Heart left ventricle (tissue), 16 donors: ENCODE measurements at regions of chr1 and their contacts with region 1.

Region 1: GRCh38 chr1:21255278-21255942 is 34.9 kb downstream of the ECE1 start:
- DNase-seq: peak; percentile 87 to 93 (median 90)
- ATAC-seq: peak; percentile 73 to 90 (median 84)
- H3K4me3 ChIP-seq: no peak overlapping the region
- H3K27ac ChIP-seq: peak overlapping the region in 8 of 12 donors; percentile 31 to 59 (median 43)
- H3K4me1 ChIP-seq: peaks cover 0 to 39% (median 21%) of the 10 kb centered on the region in 12 donors
- H3K27me3 ChIP-seq: no peaks in the 10 kb centered on the region
- CTCF ChIP-seq: peak; percentile 79 to 93 (median 88)
- POLR2A ChIP-seq: no peak

Region 2: DNA sequence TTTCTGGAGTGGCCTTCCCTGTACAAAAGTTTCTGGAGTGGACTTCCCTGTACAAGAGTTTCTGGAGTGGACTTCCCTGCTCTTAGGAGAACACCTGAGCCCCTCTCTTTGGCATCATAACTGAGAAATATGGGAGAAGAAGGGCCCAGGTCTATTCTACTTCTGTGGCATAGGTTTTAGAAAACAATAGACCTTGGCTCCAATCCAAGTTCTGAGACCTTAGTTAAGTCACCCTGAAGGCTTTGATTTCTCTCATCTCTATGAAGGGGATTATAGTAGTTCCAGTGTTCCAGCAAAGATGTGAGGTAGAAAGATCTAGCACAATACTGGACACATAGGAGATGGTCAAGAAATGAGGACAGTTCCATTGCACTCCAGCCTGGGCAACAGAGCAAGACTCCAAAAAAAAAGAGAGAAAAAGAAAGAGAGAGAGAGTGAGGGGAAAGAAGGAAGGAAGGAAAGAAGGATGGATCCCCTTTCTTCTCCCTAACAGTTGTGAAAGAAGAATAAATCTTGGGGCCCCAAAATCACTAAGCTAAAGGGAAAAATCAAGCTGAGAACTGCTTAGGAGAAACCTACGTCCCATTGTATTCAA is 65.4 kb before region 1 on chr1:
- intact Hi-C with region 1: no loop called
- DNase-seq: no peak
- ATAC-seq: peak in 1 of 4 donors; percentile 36
- H3K4me3 ChIP-seq: no peak overlapping the region
- H3K27ac ChIP-seq: no peak overlapping the region
- H3K4me1 ChIP-seq: peaks cover 0 to 21% (median 6%) of the 10 kb centered on the region in 12 donors
- H3K27me3 ChIP-seq: no peaks in the 10 kb centered on the region
- CTCF ChIP-seq: no peak
- POLR2A ChIP-seq: no peak

Region 3: GRCh38 chr1:21334214-21335087 is 79.0 kb after region 1 on chr1:
- intact Hi-C with region 1: loop called in 8 of 10 experiments (anchors 1 to 5 kb)
- DNase-seq: peak; percentile 76 to 88 (median 77)
- ATAC-seq: peak; percentile 23 to 59 (median 53)
- H3K4me3 ChIP-seq: peak overlapping the region in 10 of 12 donors; percentile 18 to 50 (median 34)
- H3K27ac ChIP-seq: peak overlapping the region; percentile 15 to 94 (median 82)
- H3K4me1 ChIP-seq: peaks cover 18 to 93% (median 74%) of the 10 kb centered on the region in 12 donors
- H3K27me3 ChIP-seq: no peaks in the 10 kb centered on the region
- CTCF ChIP-seq: peak; percentile 67 to 91 (median 84)
- POLR2A ChIP-seq: peak in 1 of 2 donors; percentile 8

Region 4: DNA sequence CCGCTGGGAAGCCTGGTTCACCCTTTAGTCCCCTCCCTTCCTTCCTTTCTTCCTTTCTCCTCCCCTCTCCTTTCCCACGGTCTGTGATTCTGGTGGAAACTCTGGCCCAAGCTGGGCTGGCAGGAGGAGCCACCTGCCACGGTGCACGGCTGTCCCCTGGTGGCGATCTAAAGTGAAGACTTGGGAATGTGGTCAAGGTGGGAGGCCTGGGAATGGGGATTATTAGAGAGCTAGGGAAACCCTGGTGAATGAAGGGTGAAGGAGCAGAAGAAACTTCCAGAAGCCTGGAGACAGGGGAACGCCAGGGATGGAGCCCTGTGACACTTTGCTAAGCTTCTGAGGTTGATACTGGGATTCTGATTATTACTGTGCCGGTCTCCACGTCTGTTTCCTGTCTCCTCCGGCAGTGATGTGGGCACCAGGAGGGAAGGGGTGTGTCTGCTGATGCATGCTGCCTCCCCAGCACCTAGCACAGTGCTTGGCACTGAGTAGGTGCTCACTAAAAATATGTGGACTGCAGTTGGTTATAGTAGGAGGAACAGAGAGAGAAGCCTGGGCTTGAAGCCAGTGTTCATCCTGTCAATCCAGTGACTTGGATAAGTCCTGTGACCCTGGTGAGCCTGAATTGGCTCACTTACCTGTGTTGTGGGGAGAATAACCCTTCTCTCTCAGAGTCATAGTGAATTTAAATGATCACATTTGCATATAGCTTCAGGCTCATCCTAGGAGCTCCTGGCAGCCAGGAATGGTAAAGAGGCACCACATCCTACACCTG is 113.3 kb after region 1 on chr1:
- intact Hi-C with region 1: loop called (anchors 1 to 2 kb)
- DNase-seq: peak; percentile 80 to 88 (median 83)
- ATAC-seq: peak; percentile 79 to 96 (median 94)
- H3K4me3 ChIP-seq: peak overlapping the region in 1 of 12 donors; percentile 12
- H3K27ac ChIP-seq: peak overlapping the region in 1 of 12 donors; percentile 17
- H3K4me1 ChIP-seq: peaks cover 0 to 12% (median 1%) of the 10 kb centered on the region in 12 donors
- H3K27me3 ChIP-seq: no peaks in the 10 kb centered on the region
- CTCF ChIP-seq: peak; percentile 96 to 100 (median 99)
- POLR2A ChIP-seq: no peak

Region 5: GRCh38 chr1:21594935-21595897 is 339.8 kb after region 1 on chr1:
- intact Hi-C with region 1: loop called in 1 of 10 experiments (anchors 10 kb)
- DNase-seq: peak; percentile 53 to 80 (median 70)
- ATAC-seq: peak in 2 of 4 donors; percentile 48 to 56
- H3K4me3 ChIP-seq: no peak overlapping the region
- H3K27ac ChIP-seq: no peak overlapping the region
- H3K4me1 ChIP-seq: peaks cover 0 to 7% (median 0%) of the 10 kb centered on the region in 12 donors
- H3K27me3 ChIP-seq: no peaks in the 10 kb centered on the region
- CTCF ChIP-seq: peak; percentile 50 to 71 (median 64)
- POLR2A ChIP-seq: no peak

Region 6: GRCh38 chr1:21659099-21659923 is 403.9 kb after region 1 on chr1:
- intact Hi-C with region 1: loop called in 2 of 10 experiments (anchors 5 to 10 kb)
- DNase-seq: peak; percentile 72 to 89 (median 75)
- ATAC-seq: peak; percentile 72 to 78 (median 76)
- H3K4me3 ChIP-seq: peak overlapping the region in 4 of 12 donors; percentile 23 to 33 (median 28)
- H3K27ac ChIP-seq: no peak overlapping the region
- H3K4me1 ChIP-seq: peaks cover 0 to 14% (median 4%) of the 10 kb centered on the region in 12 donors
- H3K27me3 ChIP-seq: peaks cover 0 to 16% (median 0%) of the 10 kb centered on the region in 9 donors
- CTCF ChIP-seq: peak; percentile 90 to 99 (median 94)
- POLR2A ChIP-seq: peak in 1 of 2 donors; percentile 11